OCI-LY7 (cell line): ENCODE measurements at regions of chr5 and their contacts with region 1.

Region 1: GRCh38 chr5:172173831-172174153 is 14.2 kb downstream of the STK10 start:
- DNase-seq: no peak
- H3K4me3 ChIP-seq: peak overlapping the region; percentile 73
- H3K27ac ChIP-seq: peak overlapping the region; percentile 87
- H3K4me1 ChIP-seq: peaks cover 52% of the 10 kb centered on the region
- CTCF ChIP-seq: no peak

Region 2: DNA sequence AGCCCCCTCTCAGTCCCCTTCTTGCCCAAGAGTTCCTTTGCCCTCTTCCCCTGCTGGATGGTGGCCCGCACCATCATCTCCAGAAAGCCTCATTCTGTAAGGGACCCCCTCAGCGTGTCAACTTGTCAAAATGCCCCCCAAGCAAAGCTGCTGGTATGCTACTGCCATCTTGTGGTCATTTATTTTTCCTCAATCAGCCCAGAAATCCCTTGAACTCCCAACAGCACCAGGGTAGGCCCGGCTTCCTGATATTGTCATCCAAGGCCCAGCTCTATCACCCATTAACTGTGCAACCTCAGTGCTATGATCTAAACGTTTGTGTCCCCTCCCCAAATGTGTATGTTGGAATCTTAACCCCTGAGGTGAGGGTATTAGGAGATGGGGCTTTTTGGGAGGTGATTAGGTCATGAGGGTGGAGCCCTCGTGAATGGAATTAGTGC is 114.1 kb before region 1 on chr5:
- CTCF ChIA-PET with region 1: no interaction called
- POLR2A ChIA-PET with region 1: no interaction called
- intact Hi-C with region 1: no loop called
- DNase-seq: peak; percentile 37
- H3K4me3 ChIP-seq: no peak overlapping the region
- H3K27ac ChIP-seq: no peak overlapping the region
- H3K4me1 ChIP-seq: no peaks in the 10 kb centered on the region
- CTCF ChIP-seq: peak; percentile 82

Region 3: GRCh38 chr5:172162323-172162986 is 11.3 kb before region 1 on chr5:
- CTCF ChIA-PET with region 1: interaction called, 9 read pairs
- POLR2A ChIA-PET with region 1: interaction called, 11 read pairs
- intact Hi-C with region 1: no loop called
- DNase-seq: no peak
- H3K4me3 ChIP-seq: no peak overlapping the region
- H3K27ac ChIP-seq: no peak overlapping the region
- H3K4me1 ChIP-seq: peaks cover 44% of the 10 kb centered on the region
- CTCF ChIP-seq: no peak